Naive thymus-derived CD4-positive, alpha-beta T cell (primary cell): ENCODE measurements at regions of chr18 and their contacts with region 1.

Region 1: GRCh38 chr18:46073474-46074331 is 1.6 kb upstream of the PSTPIP2 start:
- DNase-seq: peak in 8 of 9 donors; percentile 44 to 83 (median 72)
- ATAC-seq: peak; percentile 61
- H3K4me3 ChIP-seq: peak overlapping the region; percentile 23
- H3K4me3 Mint-ChIP-seq: peak overlapping the region in 9 of 10 donors; percentile 57 to 90 (median 85)
- H3K27ac ChIP-seq: no peak overlapping the region
- H3K27ac Mint-ChIP-seq: peak overlapping the region in 4 of 9 donors; percentile 19 to 77 (median 62)
- H3K4me1 ChIP-seq: peaks cover 13 to 25% of the 10 kb centered on the region in 2 donors
- H3K4me1 Mint-ChIP-seq: peaks cover 23 to 41% (median 38%) of the 10 kb centered on the region in 7 donors
- H3K27me3 ChIP-seq: no peaks in the 10 kb centered on the region
- H3K27me3 Mint-ChIP-seq: no peaks in the 10 kb centered on the region

Region 2: GRCh38 chr18:45664824-45665763 is 408.6 kb before region 1 on chr18:
- CTCF ChIA-PET with region 1: interaction called, 9 read pairs
- POLR2A ChIA-PET with region 1: interaction called, 3 read pairs
- intact Hi-C with region 1: loop called (anchors 1 kb)
- DNase-seq: peak; percentile 35 to 76 (median 63)
- ATAC-seq: peak; percentile 86
- H3K4me3 ChIP-seq: no peak overlapping the region
- H3K4me3 Mint-ChIP-seq: peak overlapping the region; percentile 1 to 87 (median 62)
- H3K27ac ChIP-seq: no peak overlapping the region
- H3K27ac Mint-ChIP-seq: peak overlapping the region; percentile 8 to 91 (median 50)
- H3K4me1 ChIP-seq: peaks cover 41 to 49% of the 10 kb centered on the region in 2 donors
- H3K4me1 Mint-ChIP-seq: peaks cover 38 to 67% (median 53%) of the 10 kb centered on the region in 7 donors
- H3K27me3 ChIP-seq: no peaks in the 10 kb centered on the region
- H3K27me3 Mint-ChIP-seq: peaks cover 0 to 20% (median 0%) of the 10 kb centered on the region in 5 donors

Region 3: GRCh38 chr18:45879681-45880655 is 193.7 kb before region 1 on chr18:
- CTCF ChIA-PET with region 1: interaction called, 6 read pairs
- POLR2A ChIA-PET with region 1: no interaction called
- intact Hi-C with region 1: loop called (anchors 1 to 2 kb)
- DNase-seq: peak; percentile 48 to 80 (median 69)
- ATAC-seq: peak; percentile 98
- H3K4me3 ChIP-seq: no peak overlapping the region
- H3K4me3 Mint-ChIP-seq: peak overlapping the region in 1 of 10 donors; percentile 8
- H3K27ac ChIP-seq: no peak overlapping the region
- H3K27ac Mint-ChIP-seq: peak overlapping the region in 7 of 9 donors; percentile 17 to 67 (median 41)
- H3K4me1 ChIP-seq: peaks cover 0 to 3% of the 10 kb centered on the region in 2 donors
- H3K4me1 Mint-ChIP-seq: peaks cover 9 to 16% (median 16%) of the 10 kb centered on the region in 7 donors
- H3K27me3 ChIP-seq: no peaks in the 10 kb centered on the region
- H3K27me3 Mint-ChIP-seq: no peaks in the 10 kb centered on the region

Region 4: GRCh38 chr18:45920367-45920766 is 153.3 kb before region 1 on chr18:
- CTCF ChIA-PET with region 1: interaction called, 5 read pairs
- POLR2A ChIA-PET with region 1: interaction called, 5 read pairs
- intact Hi-C with region 1: loop called (anchors 1 kb)
- DNase-seq: no peak
- ATAC-seq: no peak
- H3K4me3 ChIP-seq: no peak overlapping the region
- H3K4me3 Mint-ChIP-seq: no peak overlapping the region
- H3K27ac ChIP-seq: no peak overlapping the region
- H3K27ac Mint-ChIP-seq: peak overlapping the region in 6 of 9 donors; percentile 5 to 52 (median 26)
- H3K4me1 ChIP-seq: peaks cover 6 to 7% of the 10 kb centered on the region in 2 donors
- H3K4me1 Mint-ChIP-seq: peaks cover 2 to 28% (median 20%) of the 10 kb centered on the region in 7 donors
- H3K27me3 ChIP-seq: no peaks in the 10 kb centered on the region
- H3K27me3 Mint-ChIP-seq: no peaks in the 10 kb centered on the region

Region 5: DNA sequence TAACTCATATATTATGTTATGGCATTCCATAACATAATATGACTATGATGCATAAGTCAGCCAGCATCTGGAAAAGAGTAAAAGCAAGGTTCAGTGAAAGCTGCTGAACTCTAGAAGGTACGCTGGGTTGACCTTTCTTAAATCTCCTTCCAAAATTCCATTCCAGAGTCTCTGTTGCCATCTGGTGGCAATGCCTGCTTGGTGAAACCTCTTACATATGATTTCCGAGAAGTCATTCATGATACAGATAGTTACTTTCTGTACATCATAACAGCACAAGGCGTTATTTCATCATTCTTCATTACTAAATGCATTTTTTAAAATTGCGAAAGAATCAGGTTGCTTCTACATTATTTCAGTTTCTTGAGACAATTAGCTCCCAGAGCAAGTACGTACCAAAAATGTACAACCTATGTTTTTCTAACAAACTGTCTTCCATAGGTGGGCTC is 99.6 kb before region 1 on chr18:
- CTCF ChIA-PET with region 1: interaction called, 5 read pairs
- POLR2A ChIA-PET with region 1: interaction called, 3 read pairs
- intact Hi-C with region 1: loop called (anchors 1 kb)
- DNase-seq: peak in 8 of 9 donors; percentile 36 to 68 (median 60)
- ATAC-seq: peak; percentile 94
- H3K4me3 ChIP-seq: no peak overlapping the region
- H3K4me3 Mint-ChIP-seq: peak overlapping the region in 4 of 10 donors; percentile 3 to 35 (median 12)
- H3K27ac ChIP-seq: no peak overlapping the region
- H3K27ac Mint-ChIP-seq: peak overlapping the region in 3 of 9 donors; percentile 13 to 77 (median 56)
- H3K4me1 ChIP-seq: peaks cover 0 to 6% of the 10 kb centered on the region in 2 donors
- H3K4me1 Mint-ChIP-seq: peaks cover 0 to 9% (median 7%) of the 10 kb centered on the region in 7 donors
- H3K27me3 ChIP-seq: no peaks in the 10 kb centered on the region
- H3K27me3 Mint-ChIP-seq: no peaks in the 10 kb centered on the region

Region 6: DNA sequence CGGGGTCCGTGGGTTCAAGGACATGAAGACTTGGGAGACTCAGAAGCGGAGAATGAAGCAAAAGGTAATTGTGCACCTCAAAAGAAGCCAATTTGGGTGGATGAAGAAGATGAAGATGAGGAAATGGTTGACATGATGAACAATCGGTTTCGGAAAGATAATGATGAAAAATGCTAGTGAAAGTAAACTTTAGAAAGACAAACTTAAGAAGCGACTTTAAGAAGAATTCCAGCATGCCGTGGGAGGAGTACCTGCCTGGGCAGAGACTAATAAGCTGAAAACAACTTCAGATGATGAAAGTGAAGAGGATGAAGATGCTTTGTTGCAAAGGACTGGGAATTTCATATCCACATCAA is 45.2 kb before region 1 on chr18:
- CTCF ChIA-PET with region 1: interaction called, 4 read pairs
- POLR2A ChIA-PET with region 1: interaction called, 6 read pairs
- intact Hi-C with region 1: loop called (anchors 1 kb)
- DNase-seq: no peak
- ATAC-seq: no peak
- H3K4me3 ChIP-seq: peak overlapping the region; percentile 89
- H3K4me3 Mint-ChIP-seq: peak overlapping the region; percentile 80 to 96 (median 92)
- H3K27ac ChIP-seq: peak overlapping the region; percentile 54
- H3K27ac Mint-ChIP-seq: peak overlapping the region in 8 of 9 donors; percentile 25 to 86 (median 76)
- H3K4me1 ChIP-seq: peaks cover 0 to 5% of the 10 kb centered on the region in 2 donors
- H3K4me1 Mint-ChIP-seq: peaks cover 7 to 14% (median 13%) of the 10 kb centered on the region in 7 donors
- H3K27me3 ChIP-seq: no peaks in the 10 kb centered on the region
- H3K27me3 Mint-ChIP-seq: peaks cover 0 to 14% (median 0%) of the 10 kb centered on the region in 5 donors

Region 7: DNA sequence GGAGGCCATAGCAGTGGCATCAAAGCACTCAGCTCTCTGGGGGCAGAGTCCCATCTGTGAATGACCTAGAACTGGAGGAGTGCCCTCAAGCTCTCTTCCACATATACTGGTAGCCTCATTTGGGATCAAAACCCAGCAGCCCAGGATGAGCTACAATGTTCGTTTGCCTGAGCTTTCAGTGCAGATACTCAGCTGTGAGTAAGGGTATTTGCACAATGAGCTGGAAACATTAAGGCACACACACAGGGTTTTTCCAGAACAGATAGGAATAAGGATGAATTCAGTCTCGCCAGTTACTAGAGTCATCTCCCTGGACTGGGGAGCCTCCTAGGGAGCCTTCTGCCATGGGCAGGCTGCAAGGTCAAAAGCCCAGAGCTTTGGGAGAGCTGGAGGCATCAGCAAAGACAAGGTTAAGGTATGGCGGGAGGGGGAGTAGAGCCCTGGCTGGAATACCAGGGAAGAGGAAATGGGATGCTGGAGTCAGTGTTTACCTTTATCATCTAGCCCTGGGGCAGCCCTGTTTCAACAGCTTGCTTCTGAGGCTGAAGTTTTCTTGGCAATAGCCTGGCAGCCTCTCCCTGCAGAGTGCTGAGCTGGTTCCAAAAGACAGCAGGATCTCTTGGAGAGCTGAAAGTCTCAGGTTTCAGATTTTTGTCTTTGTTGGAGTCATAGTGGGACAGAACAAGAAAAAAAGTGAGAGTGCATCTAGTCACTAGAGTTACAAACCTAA is 395.6 kb after region 1 on chr18:
- CTCF ChIA-PET with region 1: no interaction called
- POLR2A ChIA-PET with region 1: no interaction called
- intact Hi-C with region 1: no loop called
- DNase-seq: no peak
- ATAC-seq: no peak
- H3K4me3 ChIP-seq: no peak overlapping the region
- H3K4me3 Mint-ChIP-seq: no peak overlapping the region
- H3K27ac ChIP-seq: no peak overlapping the region
- H3K27ac Mint-ChIP-seq: no peak overlapping the region
- H3K4me1 ChIP-seq: no peaks in the 10 kb centered on the region
- H3K4me1 Mint-ChIP-seq: peaks cover 0 to 4% (median 0%) of the 10 kb centered on the region in 7 donors
- H3K27me3 ChIP-seq: no peaks in the 10 kb centered on the region
- H3K27me3 Mint-ChIP-seq: peaks cover 0 to 27% (median 11%) of the 10 kb centered on the region in 5 donors